Tibial artery (tissue), 4 donors: ENCODE measurements at regions of chr12 and their contacts with region 1.

Region 1: GRCh38 chr12:108099073-108099472 is 30.0 kb upstream of the WSCD2 start:
- DNase-seq: no peak
- H3K4me3 ChIP-seq: no peak overlapping the region
- H3K27ac ChIP-seq: no peak overlapping the region
- H3K4me1 ChIP-seq: no peaks in the 10 kb centered on the region
- H3K27me3 ChIP-seq: peaks cover 0 to 7% of the 10 kb centered on the region in 2 donors
- CTCF ChIP-seq: peak; percentile 42 to 58

Region 2: GRCh38 chr12:108129017-108129812 is 30.1 kb after region 1 on chr12 and contains the start of gene WSCD2:
- intact Hi-C with region 1: no loop called
- DNase-seq: peak; percentile 52 to 80
- H3K4me3 ChIP-seq: peak within 1 kb of the TSS; percentile 50 to 55
- H3K27ac ChIP-seq: peak within 1 kb of the TSS; percentile 68 to 71
- H3K4me1 ChIP-seq: peaks cover 0 to 32% (median 17%) of the 10 kb centered on the region in 4 donors
- H3K27me3 ChIP-seq: peaks cover 0 to 4% of the 10 kb centered on the region in 2 donors
- CTCF ChIP-seq: peak; percentile 44 to 66

Region 3: DNA sequence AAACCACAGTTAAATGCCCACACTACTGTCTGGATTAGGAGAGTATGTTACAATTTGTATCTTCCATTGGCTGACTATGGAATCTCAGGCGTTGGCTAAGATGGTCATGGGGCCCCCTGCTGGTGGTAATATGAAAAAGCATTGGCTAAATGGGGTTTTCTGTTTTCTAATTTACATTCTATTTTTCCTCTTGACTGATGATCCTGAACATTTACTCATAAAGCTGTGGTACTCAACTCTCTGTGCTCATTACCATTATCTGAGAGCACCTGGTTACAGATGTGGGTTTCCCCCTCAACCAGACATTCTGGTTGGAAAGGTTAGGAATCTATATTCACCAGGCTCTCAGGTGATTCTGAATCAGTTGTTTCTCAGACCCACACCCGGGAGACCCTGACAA is 94.8 kb after region 1 on chr12:
- intact Hi-C with region 1: loop called (anchors 5 kb)
- DNase-seq: no peak
- H3K4me3 ChIP-seq: no peak overlapping the region
- H3K27ac ChIP-seq: no peak overlapping the region
- H3K4me1 ChIP-seq: peaks cover 0 to 12% (median 7%) of the 10 kb centered on the region in 4 donors
- H3K27me3 ChIP-seq: no peaks in the 10 kb centered on the region
- CTCF ChIP-seq: peak; percentile 71 to 80